IMR-90 (cell line): ENCODE measurements at regions of chr19 and their contacts with region 1.

Region 1: GRCh38 chr19:51904331-51905165 is at the start of gene ZNF649:
- DNase-seq: peak; percentile 84
- ATAC-seq: peak; percentile 99
- H3K4me3 ChIP-seq: peak within 1 kb of the TSS; percentile 60
- H3K27ac ChIP-seq: peak within 1 kb of the TSS; percentile 49
- H3K4me1 ChIP-seq: no peaks in the 10 kb centered on the region
- H3K27me3 ChIP-seq: no peaks in the 10 kb centered on the region
- CTCF ChIP-seq: no peak; the same call in 1 of the 2 replicates
- POLR2A ChIP-seq: no peak
- RAD21 ChIP-seq: no peak
- total RNA-seq, gene ZNF649: 9.2 and 10.4 TPM in 2 replicates

Region 2: DNA sequence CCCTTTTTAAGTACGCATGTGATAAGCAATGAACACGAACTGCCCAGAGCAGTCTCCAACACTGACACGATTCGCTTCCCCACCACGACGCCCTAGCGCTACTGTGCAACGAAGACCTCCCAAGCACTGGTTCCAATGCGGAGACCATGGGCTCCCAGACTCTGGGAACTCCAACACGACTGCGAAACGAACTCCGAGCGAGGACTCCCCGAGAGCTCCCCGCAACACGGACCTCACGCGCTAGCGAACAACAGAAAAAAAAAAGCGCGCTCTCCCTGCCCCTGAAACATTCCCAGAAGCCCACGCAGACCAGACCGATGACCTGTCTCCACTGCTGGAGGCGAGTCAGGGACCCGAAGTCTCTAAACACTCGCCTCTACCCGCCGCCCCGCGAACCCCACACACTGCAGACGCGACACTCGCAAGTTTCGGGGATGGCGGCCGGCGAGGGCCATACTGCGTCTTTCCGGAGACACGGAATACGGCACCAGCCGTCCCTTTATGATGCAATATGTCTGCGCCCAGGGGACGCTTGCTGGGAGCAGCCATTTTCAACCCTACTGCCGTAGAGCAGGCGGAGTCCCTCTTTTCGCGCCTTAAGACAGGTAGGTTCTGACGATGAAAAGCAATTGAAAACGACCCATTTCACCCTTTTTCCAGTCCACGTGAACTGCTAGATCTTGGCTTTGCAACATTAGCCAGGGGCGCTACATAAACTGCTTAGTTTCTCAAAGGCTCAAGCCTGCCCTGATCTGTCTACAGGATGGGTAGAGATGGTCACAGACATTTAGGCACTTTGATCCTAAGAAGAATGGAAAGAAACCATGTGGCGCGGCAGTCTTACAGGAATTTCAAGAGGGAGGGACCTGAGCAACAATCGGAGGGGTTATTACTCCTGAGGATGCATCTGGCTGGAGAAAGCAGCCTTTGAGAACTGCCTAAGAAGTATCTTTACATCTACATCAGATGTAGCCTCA is 16.7 kb before region 1 on chr19 and contains the start of gene ZNF577:
- CTCF ChIA-PET with region 1: no interaction called
- POLR2A ChIA-PET with region 1: no interaction called
- dilution Hi-C with region 1: no loop called
- in situ Hi-C with region 1: no loop called
- intact Hi-C with region 1: loop called (anchors 1 kb)
- DNase-seq: peak; percentile 93
- ATAC-seq: peak; percentile 99
- H3K4me3 ChIP-seq: peak within 1 kb of the TSS; percentile 76
- H3K27ac ChIP-seq: peak within 1 kb of the TSS; percentile 69
- H3K4me1 ChIP-seq: no peaks in the 10 kb centered on the region
- H3K27me3 ChIP-seq: no peaks in the 10 kb centered on the region
- CTCF ChIP-seq: no peak
- POLR2A ChIP-seq: 0 out of 2 replicates have a peak, but pooled peaks have one; percentile 37
- RAD21 ChIP-seq: peak; percentile 16; the same call in 1 of the 2 replicates
- total RNA-seq, gene ZNF577: 2.9 and 4.4 TPM in 2 replicates

Region 3: GRCh38 chr19:52187406-52187805 is 282.9 kb after region 1 on chr19:
- CTCF ChIA-PET with region 1: no interaction called
- POLR2A ChIA-PET with region 1: no interaction called
- dilution Hi-C with region 1: no loop called
- in situ Hi-C with region 1: no loop called
- intact Hi-C with region 1: no loop called
- DNase-seq: no peak
- ATAC-seq: no peak
- H3K4me3 ChIP-seq: no peak overlapping the region
- H3K27ac ChIP-seq: no peak overlapping the region
- H3K4me1 ChIP-seq: peaks cover 6% of the 10 kb centered on the region; the same call in 1 of the 2 replicates
- H3K27me3 ChIP-seq: no peaks in the 10 kb centered on the region
- CTCF ChIP-seq: no peak
- POLR2A ChIP-seq: no peak
- RAD21 ChIP-seq: no peak